Right ventricle myocardium inferior (tissue), 1 donor: ENCODE measurements at regions of chr17 and their contacts with region 1.

Region 1: DNA sequence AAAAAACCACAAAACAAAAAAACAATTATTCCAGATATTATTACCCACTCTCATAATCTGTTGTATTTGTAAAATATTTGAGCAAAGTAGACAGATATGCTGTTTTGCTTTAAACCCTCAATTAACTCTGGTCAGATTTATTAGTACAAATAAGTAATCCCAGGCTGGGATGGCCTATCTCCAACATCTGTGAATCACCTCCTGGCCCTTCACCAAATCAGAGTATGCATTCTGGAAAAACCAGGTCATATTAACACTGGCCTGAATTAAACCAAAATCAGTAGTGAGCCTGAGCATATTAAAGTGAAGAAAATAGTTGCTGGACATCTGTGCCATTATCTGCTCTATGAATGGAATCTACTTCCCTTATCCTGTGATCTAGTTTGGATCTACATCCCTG is 41.0 kb downstream of the STAT3 start:
- DNase-seq: no peak
- ATAC-seq: peak; percentile 30

Region 2: GRCh38 chr17:42312285-42313130 is 34.7 kb before region 1 on chr17:
- intact Hi-C with region 1: no loop called
- DNase-seq: peak; percentile 91
- ATAC-seq: peak; percentile 81

Region 3: GRCh38 chr17:42388381-42389134 is 41.4 kb after region 1 on chr17 and contains the start of gene STAT3:
- intact Hi-C with region 1: loop called (anchors 5 kb)
- DNase-seq: peak; percentile 100
- ATAC-seq: peak; percentile 98
- total RNA-seq, gene STAT3: 183 TPM

Region 4: DNA sequence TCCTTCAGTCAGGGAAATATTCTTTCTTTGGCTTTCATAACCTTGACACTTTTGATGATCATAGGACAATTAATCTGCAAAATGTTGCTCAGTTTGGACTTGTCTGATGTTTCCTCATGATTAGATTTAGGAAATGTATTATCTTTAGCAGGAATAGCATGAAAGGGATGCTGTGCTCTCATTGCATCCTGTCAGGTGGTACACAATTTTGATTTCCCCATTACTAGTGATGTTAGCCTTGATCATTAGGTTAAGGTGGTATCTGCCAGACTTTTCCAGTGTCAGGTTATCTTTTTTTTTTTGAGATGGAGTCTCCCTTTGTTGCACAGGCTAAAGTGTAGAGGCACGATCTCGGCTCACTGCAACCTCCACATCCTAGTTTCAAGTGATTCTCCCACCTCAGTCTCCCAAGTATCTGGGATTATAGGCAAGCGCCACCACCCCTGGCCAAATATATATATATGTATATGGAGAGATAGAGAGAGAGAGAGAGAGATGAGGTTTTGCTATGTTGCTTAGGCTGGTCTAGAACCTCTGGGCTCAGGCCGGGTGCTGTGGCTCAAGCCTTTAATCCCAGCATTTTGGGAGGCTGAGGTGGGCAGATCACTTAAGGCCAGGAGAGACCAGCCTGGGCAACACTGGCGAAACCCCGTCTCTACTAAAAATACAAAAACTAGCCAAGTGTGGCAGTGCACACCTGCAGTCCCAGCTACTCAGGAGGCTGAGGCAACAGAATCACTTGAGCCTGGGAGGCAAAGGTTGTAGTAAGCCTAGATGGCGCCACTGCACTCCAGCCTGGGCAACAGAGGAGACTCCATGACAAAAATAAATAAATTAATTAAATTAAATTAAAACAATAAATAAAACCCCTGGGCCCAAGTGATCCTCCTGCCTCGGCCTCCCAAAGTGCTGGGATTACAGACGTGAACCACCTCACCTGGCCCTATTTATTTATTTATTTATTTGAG is 91.7 kb after region 1 on chr17:
- intact Hi-C with region 1: no loop called
- DNase-seq: peak; percentile 66
- ATAC-seq: no peak